Activated T-helper 2 cell treated with anti-CD3 and anti-CD28 coated beads, Interferon-gamma antibody, Interleukin-2, Interleukin-4, amounts not matched to agents 10 μg/mL and 5 μg/mL and 100 μg/mL, durations not matched to agents 14 hours and 24 hours and 36 hours (primary cell): ENCODE measurements at regions of chr6 and their contacts with region 1.

Region 1: DNA sequence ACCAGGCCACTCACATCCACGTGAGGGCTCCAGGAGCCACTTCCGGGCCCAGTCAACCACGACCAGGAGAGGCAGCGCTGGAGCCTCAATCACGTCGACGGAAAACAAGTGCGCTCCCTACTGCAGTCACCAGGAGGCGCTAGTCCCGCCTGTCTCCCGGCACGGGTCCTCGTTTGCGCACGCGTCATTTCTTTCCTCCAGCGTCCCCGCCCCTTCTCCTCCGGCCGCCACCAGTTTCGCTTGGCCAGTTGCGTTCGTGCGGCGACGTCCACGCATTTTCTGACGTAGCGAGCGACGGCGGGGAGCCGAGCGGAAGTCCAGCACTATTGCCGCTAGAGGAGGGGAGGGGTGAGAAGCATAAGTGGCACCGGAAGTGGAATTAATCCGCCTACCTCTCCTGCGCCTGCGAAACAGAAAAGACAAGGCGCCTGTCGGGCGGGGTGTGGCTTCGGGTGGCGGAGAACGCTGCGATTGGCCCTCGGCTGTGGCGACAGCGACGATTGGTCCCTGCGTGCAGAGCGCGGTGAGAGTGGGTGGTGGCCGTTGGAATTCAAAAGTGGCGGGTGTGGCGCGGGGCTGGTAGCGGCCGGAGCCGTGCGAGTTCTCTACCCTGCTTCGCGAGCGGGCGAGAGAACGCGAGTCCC is at the start of gene KIFC1:
- DNase-seq: peak; percentile 99
- H3K4me3 Mint-ChIP-seq: peak within 1 kb of the TSS; percentile 87
- H3K27ac Mint-ChIP-seq: peak within 1 kb of the TSS; percentile 94
- H3K4me1 Mint-ChIP-seq: peaks cover 42% of the 10 kb centered on the region
- H3K27me3 Mint-ChIP-seq: no peaks in the 10 kb centered on the region
- total RNA-seq, gene KIFC1: 78.3 and 80.9 TPM in 2 replicates

Region 2: DNA sequence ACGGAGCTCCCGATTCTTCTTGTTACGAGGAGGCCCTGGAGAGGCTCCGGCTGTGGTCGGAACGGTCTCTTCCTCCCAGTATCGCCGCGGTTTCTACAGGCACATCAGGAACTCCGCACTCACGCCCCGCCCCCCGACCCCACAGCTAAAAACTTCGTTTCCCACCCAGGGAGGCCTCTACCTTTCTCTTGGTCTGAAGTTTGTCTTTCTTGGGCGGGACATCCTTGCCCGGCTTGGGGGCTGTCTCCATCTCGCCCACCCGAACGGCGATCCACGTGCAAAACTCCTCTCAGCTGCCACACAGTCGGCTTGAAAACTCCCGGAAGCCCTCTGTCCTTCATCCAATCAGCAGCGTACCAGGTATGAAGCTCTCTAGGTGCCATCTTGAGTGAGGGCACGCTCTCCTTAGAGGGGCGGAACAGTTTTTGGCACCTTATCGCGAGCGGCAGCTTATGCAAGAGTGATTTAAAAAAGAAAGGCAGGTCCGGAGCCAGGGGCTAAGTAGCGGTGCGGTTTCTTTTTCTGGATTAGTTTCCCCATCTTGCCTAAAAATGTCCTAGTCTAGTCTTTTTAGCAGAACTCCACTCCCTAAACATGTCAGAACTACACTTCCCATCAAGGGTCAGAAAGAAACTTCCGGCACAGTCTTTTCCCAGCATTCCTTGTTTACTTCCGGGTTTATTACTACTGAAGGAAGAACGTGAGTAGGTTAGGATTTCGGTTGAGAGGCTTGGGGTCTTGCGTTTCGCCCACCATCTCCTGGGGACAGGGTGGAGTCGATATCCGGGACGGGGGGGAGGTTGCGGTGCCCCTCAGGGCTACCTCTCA is 102.3 kb before region 1 on chr6 and contains the starts of genes PFDN6 and WDR46:
- intact Hi-C with region 1: no loop called
- DNase-seq: peak; percentile 83
- H3K4me3 Mint-ChIP-seq: peak within 1 kb of the TSS; percentile 98
- H3K27ac Mint-ChIP-seq: peak within 1 kb of the TSS; percentile 88
- H3K4me1 Mint-ChIP-seq: peaks cover 25% of the 10 kb centered on the region
- H3K27me3 Mint-ChIP-seq: no peaks in the 10 kb centered on the region
- total RNA-seq, gene PFDN6: 104 and 117 TPM in 2 replicates
- total RNA-seq, gene WDR46: 87.3 and 98.3 TPM in 2 replicates

Region 3: DNA sequence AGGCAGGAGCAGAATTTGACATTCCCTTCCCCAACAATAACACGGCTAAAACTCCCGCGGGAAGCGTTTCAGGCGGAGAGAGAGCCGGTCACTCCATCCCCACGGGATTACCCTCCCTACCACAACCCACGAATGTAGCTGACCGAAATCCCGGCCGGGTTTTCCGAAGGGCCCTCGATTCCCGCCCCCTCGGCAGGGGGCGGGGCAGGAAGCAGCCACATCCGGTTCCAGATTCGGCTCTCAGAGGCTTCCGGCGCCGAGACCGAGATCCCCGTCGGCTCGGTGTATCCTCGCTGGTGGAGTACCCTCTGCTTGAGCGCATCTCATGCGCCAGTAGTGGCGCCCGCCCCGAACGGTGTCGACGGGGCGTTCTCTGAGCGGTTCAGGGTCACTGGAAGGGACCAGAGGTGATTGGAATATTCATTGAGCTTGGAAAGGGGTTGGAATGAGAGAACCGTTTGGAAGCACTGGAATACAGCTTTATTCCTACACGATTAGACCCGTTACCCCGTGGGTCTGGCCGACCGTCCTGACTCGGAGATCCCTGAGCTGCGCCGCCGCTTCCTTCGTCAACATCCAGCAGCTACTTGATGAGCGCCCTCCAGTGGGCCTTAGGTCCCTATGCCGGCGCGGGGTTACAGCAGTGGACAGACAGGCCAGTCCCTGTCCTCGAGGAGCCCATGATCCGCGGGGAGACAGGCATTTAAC is 92.0 kb before region 1 on chr6:
- intact Hi-C with region 1: loop called (anchors 5 kb)
- DNase-seq: peak; percentile 92
- H3K4me3 Mint-ChIP-seq: peak overlapping the region; percentile 93
- H3K27ac Mint-ChIP-seq: peak overlapping the region; percentile 99
- H3K4me1 Mint-ChIP-seq: peaks cover 24% of the 10 kb centered on the region
- H3K27me3 Mint-ChIP-seq: no peaks in the 10 kb centered on the region

Region 4: GRCh38 chr6:33344701-33345697 is 46.4 kb before region 1 on chr6:
- intact Hi-C with region 1: loop called (anchors 2 kb)
- DNase-seq: peak; percentile 62
- H3K4me3 Mint-ChIP-seq: peak overlapping the region; percentile 69
- H3K27ac Mint-ChIP-seq: peak overlapping the region; percentile 82
- H3K4me1 Mint-ChIP-seq: peaks cover 24% of the 10 kb centered on the region
- H3K27me3 Mint-ChIP-seq: peaks cover 2% of the 10 kb centered on the region

Region 5: GRCh38 chr6:33417903-33418689 is 26.7 kb after region 1 on chr6 and contains the start of gene CUTA:
- intact Hi-C with region 1: loop called (anchors 1 kb)
- DNase-seq: peak; percentile 99
- H3K4me3 Mint-ChIP-seq: peak within 1 kb of the TSS; percentile 96
- H3K27ac Mint-ChIP-seq: peak within 1 kb of the TSS; percentile 100
- H3K4me1 Mint-ChIP-seq: peaks cover 57% of the 10 kb centered on the region
- H3K27me3 Mint-ChIP-seq: no peaks in the 10 kb centered on the region
- total RNA-seq, gene CUTA: 143 and 146 TPM in 2 replicates

Region 6: GRCh38 chr6:33445119-33445603 is 53.8 kb after region 1 on chr6:
- intact Hi-C with region 1: no loop called
- DNase-seq: no peak
- H3K4me3 Mint-ChIP-seq: no peak overlapping the region
- H3K27ac Mint-ChIP-seq: no peak overlapping the region
- H3K4me1 Mint-ChIP-seq: no peaks in the 10 kb centered on the region
- H3K27me3 Mint-ChIP-seq: no peaks in the 10 kb centered on the region

Region 7: GRCh38 chr6:33711140-33712129 is 320.0 kb after region 1 on chr6 and contains the start of gene UQCC2:
- intact Hi-C with region 1: no loop called
- DNase-seq: peak; percentile 95
- H3K4me3 Mint-ChIP-seq: peak within 1 kb of the TSS; percentile 95
- H3K27ac Mint-ChIP-seq: peak within 1 kb of the TSS; percentile 98
- H3K4me1 Mint-ChIP-seq: peaks cover 32% of the 10 kb centered on the region
- H3K27me3 Mint-ChIP-seq: peaks cover 4% of the 10 kb centered on the region
- total RNA-seq, gene UQCC2: 136 and 137 TPM in 2 replicates